Heart left ventricle (tissue), 16 donors: ENCODE measurements at regions of chr2 and their contacts with region 1.

Region 1: GRCh38 chr2:52810460-52810859 is 957.1 kb upstream of the CHAC2 start:
- DNase-seq: no peak
- ATAC-seq: peak in 3 of 4 donors; percentile 65 to 69 (median 66)
- H3K4me3 ChIP-seq: no peak overlapping the region
- H3K27ac ChIP-seq: no peak overlapping the region
- H3K4me1 ChIP-seq: no peaks in the 10 kb centered on the region
- H3K27me3 ChIP-seq: no peaks in the 10 kb centered on the region
- CTCF ChIP-seq: peak; percentile 16 to 59 (median 41)
- POLR2A ChIP-seq: no peak

Region 2: DNA sequence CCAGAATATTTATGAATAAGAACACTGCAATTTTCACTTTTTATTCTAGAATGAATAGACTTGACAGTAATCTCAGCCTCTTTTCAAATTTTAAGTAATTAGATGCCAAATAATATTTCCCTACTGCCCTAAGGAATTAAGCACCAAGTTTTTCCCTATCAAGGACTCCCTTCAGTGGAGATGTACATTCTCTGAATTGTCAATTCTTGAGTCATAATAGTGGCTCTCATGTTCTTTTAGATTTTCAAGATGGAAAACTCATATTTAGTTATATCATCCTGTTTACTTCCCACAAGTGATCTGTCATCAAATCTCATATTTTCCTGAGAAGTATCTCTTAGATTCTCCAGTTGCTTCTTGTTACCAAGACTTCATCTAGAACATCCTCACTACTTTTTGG is 291.8 kb before region 1 on chr2:
- intact Hi-C with region 1: no loop called
- DNase-seq: no peak
- ATAC-seq: no peak
- H3K4me3 ChIP-seq: no peak overlapping the region
- H3K27ac ChIP-seq: no peak overlapping the region
- H3K4me1 ChIP-seq: no peaks in the 10 kb centered on the region
- H3K27me3 ChIP-seq: no peaks in the 10 kb centered on the region
- CTCF ChIP-seq: no peak
- POLR2A ChIP-seq: no peak

Region 3: GRCh38 chr2:53202063-53202462 is 391.6 kb after region 1 on chr2:
- intact Hi-C with region 1: loop called in 6 of 10 experiments (anchors 5 to 10 kb)
- DNase-seq: no peak
- ATAC-seq: peak in 3 of 4 donors; percentile 50 to 65 (median 56)
- H3K4me3 ChIP-seq: no peak overlapping the region
- H3K27ac ChIP-seq: no peak overlapping the region
- H3K4me1 ChIP-seq: no peaks in the 10 kb centered on the region
- H3K27me3 ChIP-seq: no peaks in the 10 kb centered on the region
- CTCF ChIP-seq: peak in 6 of 12 donors; percentile 8 to 38 (median 16)
- POLR2A ChIP-seq: no peak

Region 4: GRCh38 chr2:53473248-53473647 is 662.8 kb after region 1 on chr2:
- intact Hi-C with region 1: loop called in 2 of 10 experiments (anchors 10 kb)
- DNase-seq: peak in 1 of 5 donors; percentile 28
- ATAC-seq: peak in 3 of 4 donors; percentile 65 to 84 (median 84)
- H3K4me3 ChIP-seq: no peak overlapping the region
- H3K27ac ChIP-seq: no peak overlapping the region
- H3K4me1 ChIP-seq: no peaks in the 10 kb centered on the region
- H3K27me3 ChIP-seq: no peaks in the 10 kb centered on the region
- CTCF ChIP-seq: peak in 11 of 12 donors; percentile 16 to 48 (median 30)
- POLR2A ChIP-seq: no peak

Region 5: DNA sequence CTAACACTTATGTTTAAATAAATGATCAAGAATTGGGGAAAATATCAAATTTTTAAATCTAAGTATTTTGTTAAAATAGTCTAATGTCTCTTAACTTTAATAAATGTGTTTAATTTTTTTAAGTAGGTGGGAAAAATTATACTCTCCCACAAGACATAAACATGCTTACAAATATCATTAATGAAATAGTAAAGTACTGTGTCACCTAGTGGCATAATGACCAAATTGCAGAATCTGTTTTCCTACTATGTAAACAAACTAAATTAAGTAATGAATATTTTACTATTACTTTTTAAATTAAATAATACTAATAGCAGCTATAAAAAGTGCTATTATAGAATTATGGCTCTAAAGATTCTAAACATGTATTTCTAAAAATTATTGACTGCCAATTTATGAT is 905.1 kb after region 1 on chr2:
- intact Hi-C with region 1: loop called in 3 of 10 experiments (anchors 10 kb)
- DNase-seq: no peak
- ATAC-seq: no peak
- H3K4me3 ChIP-seq: no peak overlapping the region
- H3K27ac ChIP-seq: no peak overlapping the region
- H3K4me1 ChIP-seq: peaks cover 0 to 3% (median 0%) of the 10 kb centered on the region in 12 donors
- H3K27me3 ChIP-seq: no peaks in the 10 kb centered on the region
- CTCF ChIP-seq: peak in 10 of 12 donors; percentile 42 to 69 (median 53)
- POLR2A ChIP-seq: no peak